H1 (cell line): ENCODE measurements at regions of chr20 and their contacts with region 1.

Region 1: DNA sequence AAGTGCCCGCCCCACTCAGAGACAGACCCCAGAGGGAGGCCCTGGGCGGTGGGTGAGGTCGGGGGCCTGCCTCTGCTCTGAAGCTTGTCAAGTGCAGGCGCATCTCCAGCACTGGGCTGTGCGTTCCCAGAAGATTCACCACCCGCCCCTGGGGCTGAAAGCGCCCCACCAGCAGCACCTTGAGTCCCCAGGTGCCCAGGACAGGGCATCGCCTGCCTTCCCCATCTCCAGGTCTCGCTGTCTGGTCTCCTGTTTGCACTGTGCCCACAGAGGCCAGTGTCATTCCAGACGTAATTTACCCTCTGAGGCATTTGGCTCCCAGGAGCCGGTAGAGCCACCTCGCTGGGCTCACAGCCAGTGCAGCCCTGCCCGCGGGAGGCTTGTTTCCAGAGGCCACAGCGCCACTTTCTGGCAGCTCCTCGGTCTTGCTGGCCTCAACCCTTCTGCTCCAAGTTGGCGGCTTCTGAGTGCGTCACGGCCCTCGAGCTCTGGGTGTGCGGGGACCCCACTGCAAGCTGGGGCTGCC is 191.1 kb downstream of the TAF4 start:
- DNase-seq: peak; percentile 36 to 77
- H3K4me3 ChIP-seq: no peak overlapping the region
- H3K27ac ChIP-seq: no peak overlapping the region
- H3K4me1 ChIP-seq: no peaks in the 10 kb centered on the region
- H3K27me3 ChIP-seq: no peaks in the 10 kb centered on the region; a peak in 2 of 7 replicates
- CTCF ChIP-seq: peak; percentile 85 to 94 (median 88)
- EP300 ChIP-seq: no peak
- POLR2A ChIP-seq: no peak
- RAD21 ChIP-seq: peak; percentile 93 to 94

Region 2: DNA sequence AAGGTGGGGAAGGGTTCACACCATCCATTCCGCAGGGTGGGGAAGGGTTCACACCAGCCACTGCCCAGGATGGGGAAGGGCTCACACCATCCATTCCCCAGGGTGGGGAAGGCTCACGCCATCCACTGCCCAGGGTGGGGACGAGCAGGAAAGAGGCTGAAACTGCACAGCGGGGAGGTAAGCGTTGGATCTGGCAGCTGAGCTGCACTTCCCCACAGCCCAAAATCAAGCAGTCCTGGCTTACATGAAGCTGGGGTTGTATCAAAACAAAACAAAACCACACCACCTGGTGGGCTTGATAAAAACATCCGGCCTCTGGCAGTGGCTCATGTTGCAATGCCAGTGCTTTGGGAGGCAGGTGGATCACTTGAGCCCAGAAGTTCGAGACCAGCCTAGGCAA is 77.4 kb before region 1 on chr20:
- CTCF ChIA-PET with region 1: interaction called, 12 read pairs
- POLR2A ChIA-PET with region 1: no interaction called
- DNase-seq: no peak
- H3K4me3 ChIP-seq: no peak overlapping the region
- H3K27ac ChIP-seq: no peak overlapping the region
- H3K4me1 ChIP-seq: peaks cover 0 to 3% (median 0%) of the 10 kb centered on the region in 4 experiments; a peak in 2 of 7 replicates
- H3K27me3 ChIP-seq: no peaks in the 10 kb centered on the region
- CTCF ChIP-seq: peak in 2 of 3 experiments; percentile 10 to 25; a peak in 2 of 4 replicates
- EP300 ChIP-seq: no peak
- POLR2A ChIP-seq: no peak
- RAD21 ChIP-seq: peak; percentile 31 to 33; a peak in 3 of 4 replicates

Region 3: DNA sequence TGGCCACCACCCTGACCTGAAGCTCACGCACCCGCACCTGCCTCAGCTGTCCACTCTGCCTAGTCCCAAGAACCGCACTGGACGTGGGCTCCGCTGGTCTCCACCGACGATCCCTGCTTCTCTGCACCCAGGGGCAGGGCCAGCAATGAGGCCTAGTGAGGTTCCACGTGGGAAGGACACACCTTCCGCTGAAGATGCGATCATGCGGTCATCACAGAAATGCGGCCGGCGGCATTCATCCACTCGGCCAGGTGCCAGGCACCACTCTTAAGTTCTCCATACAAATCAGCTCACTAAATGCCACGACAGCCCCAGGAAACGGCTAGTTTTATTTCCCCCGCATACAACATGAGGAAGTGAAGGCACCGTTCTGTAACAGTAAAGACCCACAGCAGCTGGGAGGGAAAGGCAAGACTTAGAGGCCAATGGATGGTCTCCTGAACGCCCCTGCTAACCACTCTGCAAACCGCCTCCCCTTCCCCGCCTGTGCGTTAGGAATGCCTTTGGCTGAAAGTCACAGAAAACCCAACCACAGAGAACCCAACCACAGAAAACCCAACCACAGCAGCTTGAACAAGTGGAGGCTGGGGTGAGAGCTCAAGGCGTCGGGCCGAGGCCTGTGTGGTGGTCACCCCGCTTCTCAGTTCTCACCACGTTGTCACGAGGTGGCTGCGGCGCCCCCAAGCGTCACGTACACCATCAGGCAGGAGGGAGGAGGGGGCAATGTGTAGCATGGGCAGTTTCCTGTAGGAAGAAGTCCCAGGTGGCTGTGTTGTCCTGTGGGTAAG is 13.3 kb before region 1 on chr20:
- CTCF ChIA-PET with region 1: interaction called, 12 read pairs
- POLR2A ChIA-PET with region 1: no interaction called
- DNase-seq: no peak
- H3K4me3 ChIP-seq: no peak overlapping the region
- H3K27ac ChIP-seq: no peak overlapping the region
- H3K4me1 ChIP-seq: no peaks in the 10 kb centered on the region
- H3K27me3 ChIP-seq: peaks cover 0 to 4% (median 0%) of the 10 kb centered on the region in 4 experiments; a peak in 3 of 7 replicates
- CTCF ChIP-seq: peak; percentile 34 to 63 (median 39); a peak in 3 of 4 replicates
- EP300 ChIP-seq: no peak
- POLR2A ChIP-seq: no peak
- RAD21 ChIP-seq: peak; percentile 45 to 58

Region 4: DNA sequence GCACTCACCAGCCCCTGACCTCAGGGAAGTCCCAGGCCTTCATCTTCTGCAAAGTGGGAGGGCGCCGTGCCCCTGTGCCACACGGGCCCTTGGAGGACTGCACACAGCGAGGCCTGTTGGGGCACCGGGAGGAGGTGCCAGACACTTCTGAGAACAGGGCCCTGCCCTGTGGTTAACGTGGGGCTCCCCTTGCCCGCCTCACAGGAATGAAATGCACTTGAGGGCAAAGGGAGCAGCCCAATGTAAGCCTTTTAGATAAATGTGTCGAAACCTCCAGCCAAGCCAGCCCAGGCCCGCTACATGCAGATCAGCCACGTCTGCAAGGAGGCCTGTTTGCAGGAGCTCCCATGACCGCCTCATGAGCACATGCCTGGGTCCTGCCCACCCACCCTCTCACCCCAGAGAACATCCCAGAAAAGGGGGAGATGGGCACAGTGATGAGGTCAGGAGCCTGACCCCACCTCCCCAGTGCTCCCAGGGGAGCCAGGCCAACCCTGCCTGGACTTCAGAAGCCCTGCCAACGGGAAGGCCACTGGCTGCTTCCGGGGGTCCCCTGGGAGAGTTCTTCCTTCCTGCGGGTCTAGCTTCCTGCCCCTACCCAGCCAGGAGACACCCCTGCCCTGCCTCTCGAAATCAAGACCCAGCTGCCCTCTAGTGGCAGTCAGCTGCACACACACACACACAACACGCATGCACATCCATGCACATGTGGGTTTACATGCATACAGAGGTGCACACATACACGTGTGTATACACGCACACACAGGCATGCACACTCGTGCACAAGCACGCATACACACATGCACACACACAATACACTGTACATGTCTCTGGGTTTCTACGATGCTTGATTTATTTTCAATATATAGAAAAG is 12.4 kb after region 1 on chr20:
- CTCF ChIA-PET with region 1: interaction called, 45 read pairs
- POLR2A ChIA-PET with region 1: no interaction called
- DNase-seq: peak in 1 of 2 experiments; percentile 66
- H3K4me3 ChIP-seq: no peak overlapping the region
- H3K27ac ChIP-seq: no peak overlapping the region
- H3K4me1 ChIP-seq: no peaks in the 10 kb centered on the region
- H3K27me3 ChIP-seq: peaks cover 0 to 3% (median 0%) of the 10 kb centered on the region in 4 experiments; a peak in 2 of 7 replicates
- CTCF ChIP-seq: peak; percentile 77 to 97 (median 97)
- EP300 ChIP-seq: no peak
- POLR2A ChIP-seq: no peak
- RAD21 ChIP-seq: peak; percentile 81 to 87